GM23248 (cell line): ENCODE measurements at regions of chr1 and their contacts with region 1.

Region 1: GRCh38 chr1:214328770-214329469 is 48.0 kb downstream of the SMYD2 start:
- DNase-seq: peak; percentile 92
- H3K4me3 ChIP-seq: no peak overlapping the region
- H3K27ac ChIP-seq: no peak overlapping the region
- H3K4me1 ChIP-seq: peaks cover 3% of the 10 kb centered on the region; the same call in 1 of the 2 replicates
- H3K27me3 ChIP-seq: no peaks in the 10 kb centered on the region

Region 2: GRCh38 chr1:214216774-214217173 is 112.1 kb before region 1 on chr1:
- in situ Hi-C with region 1: loop called (anchors 5 kb)
- DNase-seq: no peak
- H3K4me3 ChIP-seq: no peak overlapping the region
- H3K27ac ChIP-seq: no peak overlapping the region
- H3K4me1 ChIP-seq: peaks cover 21% of the 10 kb centered on the region
- H3K27me3 ChIP-seq: no peaks in the 10 kb centered on the region

Region 3: DNA sequence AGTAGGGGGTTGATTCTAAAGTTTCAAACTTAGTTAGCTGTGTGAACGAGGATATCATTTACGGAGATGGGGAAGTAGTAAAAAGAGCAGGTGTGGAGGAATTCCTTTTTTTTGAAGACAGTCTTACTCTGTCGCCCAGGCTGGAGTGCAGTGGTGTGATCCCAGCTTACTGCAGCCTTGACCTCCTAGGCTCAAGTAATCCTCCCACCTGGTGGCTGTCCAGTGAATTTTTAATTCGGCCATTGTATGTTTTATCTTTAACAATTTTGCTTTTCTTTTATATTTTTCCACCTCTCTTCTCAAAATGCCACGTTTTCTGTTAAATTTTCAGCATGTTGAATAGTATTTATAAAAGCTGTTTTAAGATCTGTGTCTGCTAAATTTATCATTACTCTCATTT is 261.8 kb after region 1 on chr1:
- in situ Hi-C with region 1: loop called (anchors 10 kb)
- DNase-seq: no peak
- H3K4me3 ChIP-seq: no peak overlapping the region
- H3K27ac ChIP-seq: no peak overlapping the region
- H3K4me1 ChIP-seq: no peaks in the 10 kb centered on the region
- H3K27me3 ChIP-seq: no peaks in the 10 kb centered on the region